PC-9 (cell line): ENCODE measurements at regions of chr12 and their contacts with region 1.

Region 1: DNA sequence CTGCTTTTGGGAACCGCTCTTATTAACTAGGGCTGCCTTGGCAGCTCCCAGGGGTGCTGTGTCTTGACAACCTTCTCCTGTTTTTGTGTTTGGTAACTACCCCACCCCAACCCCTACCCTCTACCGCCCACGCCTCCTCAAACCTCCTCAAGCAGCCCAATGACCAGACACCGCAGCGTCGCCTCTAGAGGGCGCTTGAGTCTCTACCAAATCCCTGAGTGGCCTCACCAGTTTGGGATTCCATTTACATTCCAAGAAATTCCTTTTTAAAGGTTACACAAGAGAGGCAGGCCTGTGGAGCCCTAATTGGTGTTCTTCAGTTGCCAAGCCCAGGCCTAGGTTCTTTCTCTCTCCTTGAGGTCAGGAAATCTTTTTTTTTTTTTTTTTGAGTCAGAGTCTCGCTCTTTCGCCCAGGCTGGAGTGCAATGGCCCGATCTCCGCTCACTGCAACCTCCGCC is 72.3 kb upstream of the USP44 start:
- DNase-seq: peak; percentile 71 to 82
- H3K4me3 ChIP-seq: no peak overlapping the region
- H3K27ac ChIP-seq: peak overlapping the region; percentile 30; the same call in 1 of the 2 replicates
- H3K4me1 ChIP-seq: peaks cover 7% of the 10 kb centered on the region
- H3K27me3 ChIP-seq: no peaks in the 10 kb centered on the region
- CTCF ChIP-seq: peak; percentile 76

Region 2: DNA sequence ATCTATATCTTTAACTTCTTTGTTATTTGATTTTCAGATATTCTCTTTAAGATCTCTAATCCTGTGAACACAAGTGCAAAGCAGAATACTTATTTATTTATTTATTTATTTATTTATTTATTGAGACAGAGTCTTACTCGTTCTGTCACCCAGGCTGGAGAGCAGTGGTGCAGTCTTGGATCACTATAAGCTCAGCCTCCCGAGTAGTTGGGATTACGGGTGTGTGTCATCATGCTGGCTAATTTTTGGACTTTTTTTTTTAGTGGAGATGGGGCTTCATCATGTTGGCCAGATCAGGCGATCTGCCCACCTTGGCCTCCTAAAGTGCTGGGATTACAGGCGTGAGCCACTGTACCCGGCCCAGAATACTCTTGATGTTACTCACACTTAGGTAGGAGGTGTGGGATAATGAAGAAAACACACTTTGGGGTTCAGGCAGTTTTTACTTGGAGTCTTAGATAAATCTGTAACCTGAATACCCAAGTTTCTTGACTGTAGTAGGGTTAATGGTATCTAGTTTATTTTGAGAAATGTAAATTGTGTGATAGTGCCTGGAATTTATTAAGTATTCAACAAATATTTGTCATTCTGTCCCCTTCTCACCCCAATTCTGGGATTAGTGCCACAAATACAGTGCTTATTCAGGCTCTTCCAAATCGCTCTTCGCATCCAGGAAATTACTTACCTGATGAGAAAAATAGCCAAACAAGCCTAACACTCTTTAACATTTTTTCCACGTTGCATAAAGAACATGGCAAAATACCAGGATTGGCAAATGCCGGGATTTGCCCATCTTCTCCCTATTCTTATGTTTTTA is 116.7 kb before region 1 on chr12:
- CTCF ChIA-PET with region 1: no interaction called
- POLR2A ChIA-PET with region 1: no interaction called
- intact Hi-C with region 1: no loop called
- DNase-seq: no peak
- H3K4me3 ChIP-seq: no peak overlapping the region
- H3K27ac ChIP-seq: no peak overlapping the region
- H3K4me1 ChIP-seq: no peaks in the 10 kb centered on the region
- H3K27me3 ChIP-seq: no peaks in the 10 kb centered on the region
- CTCF ChIP-seq: no peak

Region 3: DNA sequence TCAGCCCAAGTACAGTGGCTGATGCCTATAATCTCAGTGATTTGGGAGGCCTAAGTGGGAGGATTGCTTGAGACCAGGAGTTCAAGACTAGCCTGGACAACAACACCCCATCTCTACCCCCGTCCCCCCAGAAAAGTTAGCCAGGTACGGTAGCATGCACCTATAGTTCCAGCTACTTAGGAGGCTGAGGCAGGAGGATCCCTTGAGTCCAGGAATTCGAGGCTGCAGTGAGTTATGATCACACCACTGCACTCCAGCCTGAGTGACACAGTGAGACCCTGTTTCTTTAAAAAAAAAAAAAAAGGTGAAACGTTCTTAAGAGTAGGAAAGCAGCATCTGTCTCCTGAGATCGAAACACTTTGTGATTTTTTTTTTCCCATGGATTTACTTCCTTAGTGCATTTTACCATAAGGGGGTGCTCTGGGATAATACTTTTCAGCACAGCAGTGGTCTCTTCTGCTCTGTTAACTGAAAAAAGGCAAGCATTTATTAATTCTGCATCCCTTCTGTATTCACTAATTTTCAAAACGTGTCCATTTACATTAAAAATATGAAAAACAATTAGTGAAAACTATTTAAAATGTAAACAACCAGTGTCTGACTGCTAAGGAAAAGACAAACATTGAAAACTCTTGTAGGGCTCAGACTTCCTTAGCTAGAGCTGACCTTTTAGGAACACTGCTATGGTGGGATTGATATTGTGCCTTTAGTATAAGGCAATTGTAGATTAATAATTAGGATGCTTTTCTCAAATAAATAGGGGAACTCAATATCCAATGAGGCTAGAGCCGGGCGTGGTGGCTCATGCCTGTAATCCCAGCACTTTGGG is 41.2 kb before region 1 on chr12:
- CTCF ChIA-PET with region 1: no interaction called
- POLR2A ChIA-PET with region 1: no interaction called
- intact Hi-C with region 1: loop called (anchors 2 kb)
- DNase-seq: peak in 1 of 2 experiments; percentile 56
- H3K4me3 ChIP-seq: no peak overlapping the region
- H3K27ac ChIP-seq: no peak overlapping the region; the same call in 1 of the 2 replicates
- H3K4me1 ChIP-seq: 0 out of 2 replicates have a peak, but pooled peaks cover 6% of the 10 kb centered on the region
- H3K27me3 ChIP-seq: no peaks in the 10 kb centered on the region
- CTCF ChIP-seq: peak; percentile 66

Region 4: GRCh38 chr12:95687937-95688336 is 64.3 kb after region 1 on chr12:
- CTCF ChIA-PET with region 1: no interaction called
- POLR2A ChIA-PET with region 1: no interaction called
- intact Hi-C with region 1: loop called (anchors 5 kb)
- DNase-seq: no peak
- H3K4me3 ChIP-seq: no peak overlapping the region
- H3K27ac ChIP-seq: no peak overlapping the region
- H3K4me1 ChIP-seq: no peaks in the 10 kb centered on the region
- H3K27me3 ChIP-seq: no peaks in the 10 kb centered on the region
- CTCF ChIP-seq: no peak

Region 5: DNA sequence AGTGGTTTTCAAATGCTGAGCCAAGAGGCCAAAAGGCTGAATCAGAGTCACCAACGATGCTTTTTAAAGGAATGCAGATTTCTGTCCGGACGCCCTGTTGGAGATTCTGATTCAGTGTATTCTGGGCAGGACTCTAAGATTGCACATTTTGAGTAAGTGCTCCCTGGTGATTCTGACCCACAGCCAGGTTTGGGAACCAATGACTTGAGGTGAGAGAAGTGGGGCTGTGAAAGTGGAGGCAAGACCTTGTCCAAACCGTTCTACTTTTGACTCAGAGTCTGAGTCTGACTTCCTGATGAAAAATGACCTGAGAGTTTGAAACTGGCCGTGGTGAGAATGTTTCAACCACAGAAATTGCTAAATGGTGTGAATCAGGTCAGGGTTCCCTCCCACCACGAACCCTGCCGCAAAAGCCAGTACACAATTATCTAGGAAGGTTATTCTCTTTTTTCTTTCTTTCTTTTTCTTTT is 76.7 kb after region 1 on chr12:
- CTCF ChIA-PET with region 1: no interaction called
- POLR2A ChIA-PET with region 1: no interaction called
- intact Hi-C with region 1: loop called (anchors 5 kb)
- DNase-seq: peak; percentile 10 to 91
- H3K4me3 ChIP-seq: no peak overlapping the region
- H3K27ac ChIP-seq: peak overlapping the region; percentile 96
- H3K4me1 ChIP-seq: peaks cover 37% of the 10 kb centered on the region
- H3K27me3 ChIP-seq: no peaks in the 10 kb centered on the region
- CTCF ChIP-seq: no peak

Region 6: GRCh38 chr12:95763809-95764253 is 140.2 kb after region 1 on chr12:
- CTCF ChIA-PET with region 1: no interaction called
- POLR2A ChIA-PET with region 1: no interaction called
- intact Hi-C with region 1: loop called (anchors 1 kb)
- DNase-seq: peak; percentile 37 to 83
- H3K4me3 ChIP-seq: no peak overlapping the region
- H3K27ac ChIP-seq: peak overlapping the region; percentile 60
- H3K4me1 ChIP-seq: peaks cover 27% of the 10 kb centered on the region
- H3K27me3 ChIP-seq: no peaks in the 10 kb centered on the region
- CTCF ChIP-seq: no peak

Region 7: DNA sequence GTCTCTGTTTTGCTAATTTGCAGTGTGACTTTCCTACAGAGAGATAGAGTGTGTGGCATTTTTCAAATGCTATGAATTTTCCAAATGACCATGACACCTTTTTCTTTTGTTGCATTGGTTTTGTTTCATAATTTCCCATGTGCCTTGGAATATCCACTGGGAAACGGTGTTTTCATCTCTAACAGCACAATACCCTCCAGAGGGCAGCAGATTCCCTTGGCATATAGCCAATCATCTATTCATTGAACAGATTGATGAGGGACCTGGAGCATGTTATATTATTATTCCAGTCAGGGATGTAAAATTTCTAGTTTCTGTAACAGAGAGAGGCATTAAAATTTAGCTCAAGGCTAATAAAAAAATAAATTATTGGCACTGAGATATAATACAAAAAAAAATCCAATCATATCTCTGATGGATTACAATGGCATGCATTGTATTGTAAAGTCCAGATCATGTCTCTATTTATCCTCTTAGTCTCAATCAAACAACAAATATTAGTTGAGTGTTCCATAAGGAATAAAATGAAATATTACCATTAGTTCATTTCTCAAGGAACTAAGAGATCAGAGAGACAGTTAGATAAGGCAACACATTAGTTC is 196.6 kb after region 1 on chr12:
- CTCF ChIA-PET with region 1: no interaction called
- POLR2A ChIA-PET with region 1: no interaction called
- intact Hi-C with region 1: loop called (anchors 1 kb)
- DNase-seq: peak in 1 of 2 experiments; percentile 46
- H3K4me3 ChIP-seq: no peak overlapping the region
- H3K27ac ChIP-seq: no peak overlapping the region
- H3K4me1 ChIP-seq: peaks cover 4% of the 10 kb centered on the region
- H3K27me3 ChIP-seq: no peaks in the 10 kb centered on the region
- CTCF ChIP-seq: peak; percentile 69